Endothelial cell of umbilical vein (primary cell): ENCODE measurements at regions of chrX and their contacts with region 1.

Region 1: DNA sequence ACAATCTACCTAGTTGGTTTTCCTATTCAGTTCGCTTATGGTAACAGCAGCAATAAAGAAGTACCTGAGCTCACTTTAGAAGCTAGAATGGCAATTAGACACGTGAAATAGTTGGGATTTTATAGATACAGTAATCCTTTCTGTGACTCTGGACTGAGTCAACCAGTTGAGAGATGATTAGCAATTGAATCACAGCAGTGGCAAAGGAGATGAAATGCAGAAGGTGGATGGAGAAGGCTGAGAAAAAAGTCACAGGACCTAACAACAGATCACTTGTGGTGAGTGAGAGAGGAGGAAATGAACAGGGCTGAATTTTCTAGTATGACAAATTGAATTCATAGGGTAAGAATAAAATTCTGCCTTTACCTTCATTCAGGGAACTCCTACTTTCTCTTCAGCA is 197.1 kb upstream of the MAGEB18 start:
- DNase-seq: peak; percentile 61
- H3K4me3 ChIP-seq: peak overlapping the region in 1 of 3 experiments; percentile 43
- H3K27ac ChIP-seq: peak overlapping the region; percentile 96
- H3K4me1 ChIP-seq: peaks cover 27% of the 10 kb centered on the region
- H3K27me3 ChIP-seq: no peaks in the 10 kb centered on the region
- CTCF ChIP-seq: no peak
- POLR2A ChIP-seq: no peak

Region 2: GRCh38 chrX:25721564-25721963 is 219.5 kb before region 1 on chrX:
- CTCF ChIA-PET with region 1: no interaction called
- POLR2A ChIA-PET with region 1: no interaction called
- dilution Hi-C with region 1: no loop called
- intact Hi-C with region 1: no loop called
- DNase-seq: peak; percentile 40
- H3K4me3 ChIP-seq: no peak overlapping the region
- H3K27ac ChIP-seq: no peak overlapping the region
- H3K4me1 ChIP-seq: no peaks in the 10 kb centered on the region
- H3K27me3 ChIP-seq: no peaks in the 10 kb centered on the region
- CTCF ChIP-seq: peak; percentile 12 to 23
- POLR2A ChIP-seq: no peak

Region 3: GRCh38 chrX:25873196-25873595 is 67.9 kb before region 1 on chrX:
- CTCF ChIA-PET with region 1: interaction called, 3 read pairs
- POLR2A ChIA-PET with region 1: no interaction called
- dilution Hi-C with region 1: no loop called
- intact Hi-C with region 1: loop called (anchors 1 kb)
- DNase-seq: peak; percentile 30
- H3K4me3 ChIP-seq: no peak overlapping the region
- H3K27ac ChIP-seq: peak overlapping the region; percentile 7
- H3K4me1 ChIP-seq: peaks cover 25% of the 10 kb centered on the region
- H3K27me3 ChIP-seq: no peaks in the 10 kb centered on the region
- CTCF ChIP-seq: no peak
- POLR2A ChIP-seq: no peak